Activated CD8-positive, alpha-beta T cell treated with anti-CD3 and anti-CD28 coated beads for 36 hours (primary cell): ENCODE measurements at regions of chr19 and their contacts with region 1.

Region 1: DNA sequence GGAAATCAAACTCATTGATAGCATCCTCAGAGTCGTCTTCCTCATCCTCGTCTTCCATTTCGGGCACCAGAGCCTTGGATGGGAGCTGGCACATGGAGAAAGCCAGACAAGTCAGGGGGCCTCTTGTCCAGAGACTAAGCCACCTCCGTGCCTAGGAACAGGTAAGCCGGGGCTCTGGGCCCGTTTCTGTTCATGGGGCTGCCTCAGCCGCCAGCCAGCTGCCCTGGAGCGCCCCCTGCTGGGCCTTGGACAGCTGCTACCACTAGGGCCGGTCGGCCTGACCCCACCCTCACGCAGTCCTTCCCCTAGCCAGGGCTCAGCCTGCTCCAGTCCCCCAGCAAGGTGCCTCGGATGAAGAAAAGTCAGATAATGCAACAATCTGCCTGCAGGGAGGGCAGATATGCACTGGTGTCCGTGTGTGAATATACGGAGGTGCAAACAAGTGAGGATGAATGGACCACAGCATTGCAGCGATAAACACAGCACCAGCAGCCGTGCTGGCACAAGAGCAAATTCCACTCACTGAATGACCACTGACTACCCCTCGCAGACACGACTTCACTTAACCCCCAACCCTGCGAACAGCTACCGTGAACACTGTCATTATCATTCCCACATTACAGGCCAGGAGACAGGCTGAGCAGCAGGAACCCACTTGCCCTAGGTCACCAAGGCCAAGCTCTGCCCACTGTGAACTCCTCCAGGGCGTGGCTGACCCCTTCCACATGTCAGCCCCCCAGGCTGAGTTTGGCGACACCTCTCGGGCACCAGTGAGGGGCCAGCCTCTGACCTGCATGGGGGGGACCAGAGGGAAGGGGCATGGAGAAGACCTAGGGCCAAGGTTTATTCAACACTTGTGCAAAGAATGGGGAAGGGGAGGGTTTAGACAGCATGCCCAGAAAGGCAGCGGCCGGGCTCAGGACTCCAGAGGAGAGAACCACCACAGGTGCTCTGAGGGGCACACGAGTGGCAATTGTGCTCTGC is 12.1 kb upstream of the PRKD2 start:
- DNase-seq: peak; percentile 88
- ATAC-seq: peak; percentile 90
- H3K4me3 Mint-ChIP-seq: no peak overlapping the region
- H3K27ac Mint-ChIP-seq: peak overlapping the region; percentile 65
- H3K4me1 Mint-ChIP-seq: peaks cover 11% of the 10 kb centered on the region
- H3K27me3 Mint-ChIP-seq: no peaks in the 10 kb centered on the region
- CTCF ChIP-seq: peak; percentile 94

Region 2: DNA sequence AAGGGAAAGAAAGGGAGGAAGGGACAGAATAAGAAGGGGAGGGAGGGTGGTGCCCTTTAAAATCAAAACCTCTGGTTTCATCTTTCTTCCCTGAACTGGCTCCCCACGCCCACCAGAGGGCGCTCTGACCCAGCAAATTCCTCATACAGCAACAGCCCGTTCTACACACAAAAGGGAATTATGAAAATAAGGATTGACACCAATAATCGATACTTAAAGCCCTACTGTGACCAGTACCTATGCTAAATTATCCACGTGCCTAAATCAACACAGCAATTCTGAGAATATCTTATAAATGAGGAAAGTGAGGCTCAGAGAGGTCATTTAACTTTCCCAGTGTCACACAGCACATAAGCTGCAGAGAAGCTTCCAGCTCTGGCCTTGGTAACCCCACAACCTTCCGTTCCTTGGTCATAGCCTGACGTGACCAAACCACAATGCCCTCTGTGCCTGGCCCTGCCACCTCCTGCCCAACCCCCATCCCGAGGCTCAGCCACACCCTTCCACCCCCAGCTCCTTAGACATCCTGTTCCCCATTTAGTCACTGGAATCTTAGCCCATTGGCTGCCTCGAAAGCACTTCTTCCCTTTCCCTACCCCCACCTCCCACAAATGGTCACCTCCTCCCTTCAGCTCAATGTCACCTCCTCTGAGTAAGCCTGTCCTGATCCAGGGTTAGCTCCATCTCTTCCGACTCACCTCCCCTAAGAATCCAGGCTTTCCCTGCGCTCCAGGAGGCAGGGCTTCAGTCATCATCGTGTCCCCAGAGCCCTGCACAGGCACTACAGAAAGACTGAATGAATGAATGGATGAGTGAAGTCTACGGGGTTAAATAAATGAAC is 199.1 kb before region 1 on chr19:
- CTCF ChIA-PET with region 1: interaction called, 11 read pairs
- POLR2A ChIA-PET with region 1: no interaction called
- intact Hi-C with region 1: no loop called
- DNase-seq: peak; percentile 79
- ATAC-seq: peak; percentile 68
- H3K4me3 Mint-ChIP-seq: no peak overlapping the region
- H3K27ac Mint-ChIP-seq: peak overlapping the region; percentile 51
- H3K4me1 Mint-ChIP-seq: peaks cover 12% of the 10 kb centered on the region
- H3K27me3 Mint-ChIP-seq: no peaks in the 10 kb centered on the region
- CTCF ChIP-seq: peak; percentile 99

Region 3: GRCh38 chr19:46697204-46697960 is 31.6 kb before region 1 on chr19:
- CTCF ChIA-PET with region 1: interaction called, 95 read pairs
- POLR2A ChIA-PET with region 1: interaction called, 3 read pairs
- intact Hi-C with region 1: no loop called
- DNase-seq: peak; percentile 48
- ATAC-seq: peak; percentile 78
- H3K4me3 Mint-ChIP-seq: no peak overlapping the region
- H3K27ac Mint-ChIP-seq: no peak overlapping the region
- H3K4me1 Mint-ChIP-seq: no peaks in the 10 kb centered on the region
- H3K27me3 Mint-ChIP-seq: no peaks in the 10 kb centered on the region
- CTCF ChIP-seq: no peak

Region 4: GRCh38 chr19:46710687-46711086 is 18.3 kb before region 1 on chr19:
- CTCF ChIA-PET with region 1: interaction called, 95 read pairs
- POLR2A ChIA-PET with region 1: interaction called, 9 read pairs
- intact Hi-C with region 1: no loop called
- DNase-seq: no peak
- ATAC-seq: no peak
- H3K4me3 Mint-ChIP-seq: no peak overlapping the region
- H3K27ac Mint-ChIP-seq: no peak overlapping the region
- H3K4me1 Mint-ChIP-seq: peaks cover 10% of the 10 kb centered on the region
- H3K27me3 Mint-ChIP-seq: no peaks in the 10 kb centered on the region
- CTCF ChIP-seq: no peak

Region 5: GRCh38 chr19:46746281-46747013 is 17.5 kb after region 1 on chr19 and contains the start of gene STRN4:
- CTCF ChIA-PET with region 1: interaction called, 37 read pairs
- POLR2A ChIA-PET with region 1: interaction called, 10 read pairs
- intact Hi-C with region 1: no loop called
- DNase-seq: peak; percentile 63
- ATAC-seq: peak; percentile 81
- H3K4me3 Mint-ChIP-seq: peak within 1 kb of the TSS; percentile 91
- H3K27ac Mint-ChIP-seq: peak within 1 kb of the TSS; percentile 88
- H3K4me1 Mint-ChIP-seq: peaks cover 47% of the 10 kb centered on the region
- H3K27me3 Mint-ChIP-seq: no peaks in the 10 kb centered on the region
- CTCF ChIP-seq: no peak
- total RNA-seq, gene STRN4: 52.5 to 63.5 TPM